Dorsolateral prefrontal cortex (tissue), 120 donors: ENCODE measurements at regions of chr5 and their contacts with region 1.

Region 1: GRCh38 chr5:179495906-179496455 is 54.4 kb upstream of the RUFY1 start:
- DNase-seq: peak in 3 of 10 donors; percentile 10 to 39 (median 21)
- H3K4me3 ChIP-seq: no peak overlapping the region
- H3K27ac ChIP-seq: no peak overlapping the region
- H3K27me3 ChIP-seq: peaks cover 0 to 5% (median 0%) of the 10 kb centered on the region in 45 donors
- CTCF ChIP-seq: peak in 2 of 56 donors; percentile 12 to 13

Region 2: DNA sequence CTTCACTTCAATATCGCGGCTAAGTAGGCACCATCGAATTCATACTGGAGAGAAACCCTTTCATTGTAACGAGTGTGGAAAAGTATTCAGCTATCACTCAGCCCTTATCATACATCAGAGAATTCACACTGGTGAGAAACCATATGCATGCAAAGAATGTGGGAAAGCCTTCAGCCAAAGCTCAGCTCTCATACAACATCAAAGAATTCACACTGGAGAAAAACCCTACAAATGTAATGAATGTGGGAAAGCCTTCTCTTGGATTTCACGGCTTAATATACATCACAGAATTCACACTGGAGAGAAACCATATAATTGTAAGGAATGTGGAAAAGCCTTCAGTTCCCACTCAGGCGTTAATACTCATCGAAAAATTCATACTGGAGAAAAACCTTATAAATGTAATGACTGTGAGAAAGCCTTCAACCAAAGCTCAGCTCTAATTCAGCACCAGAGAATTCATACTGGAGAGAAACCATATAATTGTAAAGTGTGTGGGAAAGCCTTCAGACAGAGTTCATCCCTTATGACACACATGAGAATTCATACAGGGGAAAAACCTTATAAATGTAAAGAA is 462.9 kb before region 1 on chr5:
- intact Hi-C with region 1: no loop called
- DNase-seq: no peak
- H3K4me3 ChIP-seq: no peak overlapping the region
- H3K27ac ChIP-seq: no peak overlapping the region
- H3K27me3 ChIP-seq: no peaks in the 10 kb centered on the region
- CTCF ChIP-seq: no peak

Region 3: GRCh38 chr5:179261301-179262125 is 234.5 kb before region 1 on chr5:
- intact Hi-C with region 1: loop called in 1 of 2 experiments (anchors 10 kb)
- DNase-seq: peak in 7 of 10 donors; percentile 24 to 60 (median 51)
- H3K4me3 ChIP-seq: no peak overlapping the region
- H3K27ac ChIP-seq: no peak overlapping the region
- H3K27me3 ChIP-seq: peaks cover 0 to 9% (median 0%) of the 10 kb centered on the region in 45 donors
- CTCF ChIP-seq: peak in 42 of 56 donors; percentile 9 to 59 (median 36)

Region 4: DNA sequence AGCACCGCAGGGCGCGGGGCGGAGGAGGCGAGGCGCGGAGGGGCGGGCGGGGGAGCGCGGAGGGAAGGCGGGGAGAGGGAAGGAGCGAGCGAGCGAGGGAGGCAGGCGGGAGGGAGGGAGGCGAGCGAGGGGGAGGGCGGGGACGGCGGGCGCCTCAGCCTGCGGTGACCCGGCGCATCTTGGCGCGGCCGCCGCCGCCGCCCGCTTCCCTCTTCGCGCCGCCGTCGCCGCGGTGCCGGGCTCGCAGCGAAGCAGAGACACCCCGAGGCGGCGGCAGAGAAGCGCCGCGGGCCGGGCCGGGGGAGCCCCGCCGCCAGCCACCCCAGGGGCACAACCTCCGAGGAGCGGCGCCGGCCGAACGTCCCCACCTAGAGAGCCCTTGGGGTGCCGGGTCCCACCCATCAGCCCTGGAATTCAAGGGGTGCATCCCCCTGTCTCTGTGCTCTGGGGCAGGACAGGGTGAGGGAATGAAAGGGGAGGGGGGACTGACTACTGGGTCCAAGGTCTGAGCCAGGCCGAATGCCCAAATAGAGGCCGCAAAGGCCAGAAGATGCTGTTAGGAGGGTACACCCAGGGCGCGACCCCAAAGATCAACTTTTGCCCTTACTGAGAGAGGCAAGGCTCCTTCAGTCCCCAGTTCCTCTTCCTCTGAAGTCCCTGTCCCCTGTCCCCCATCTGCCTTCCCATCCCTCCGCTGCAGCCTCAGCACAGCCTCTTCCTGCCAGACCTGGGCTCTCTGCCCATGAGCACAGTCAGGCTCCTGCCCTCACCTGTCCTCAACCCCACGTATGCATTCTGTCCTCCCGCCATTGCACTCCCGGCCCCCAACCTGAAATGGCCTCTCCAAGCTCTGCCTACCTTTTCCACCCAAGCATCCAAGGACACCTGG is 150.3 kb before region 1 on chr5 and contains the start of gene ADAMTS2:
- intact Hi-C with region 1: loop called in 1 of 2 experiments (anchors 5 kb)
- DNase-seq: peak in 6 of 10 donors; percentile 32 to 68 (median 52)
- H3K4me3 ChIP-seq: peak within 1 kb of the TSS; percentile 33 to 74 (median 60)
- H3K27ac ChIP-seq: peak within 1 kb of the TSS in 3 of 59 donors; percentile 36 to 62 (median 62)
- H3K27me3 ChIP-seq: peaks cover 0 to 38% (median 14%) of the 10 kb centered on the region in 45 donors
- CTCF ChIP-seq: peak in 7 of 56 donors; percentile 9 to 26 (median 14)
- total RNA-seq, gene ADAMTS2: 2.8 to 27.6 (median 9.1) TPM